ENCODE measurements at regions of chr5 and their contacts with region 1.

Region 1: GRCh38 chr5:10275991-10276390 is 25.9 kb downstream of the CCT5 start:
- DNase-seq: no peak
- H3K4me3 ChIP-seq: no peak overlapping the region
- H3K27ac ChIP-seq: no peak overlapping the region
- H3K4me1 ChIP-seq: no peaks in the 10 kb centered on the region
- H3K27me3 ChIP-seq: no peaks in the 10 kb centered on the region
- CTCF ChIP-seq: no peak

Region 2: DNA sequence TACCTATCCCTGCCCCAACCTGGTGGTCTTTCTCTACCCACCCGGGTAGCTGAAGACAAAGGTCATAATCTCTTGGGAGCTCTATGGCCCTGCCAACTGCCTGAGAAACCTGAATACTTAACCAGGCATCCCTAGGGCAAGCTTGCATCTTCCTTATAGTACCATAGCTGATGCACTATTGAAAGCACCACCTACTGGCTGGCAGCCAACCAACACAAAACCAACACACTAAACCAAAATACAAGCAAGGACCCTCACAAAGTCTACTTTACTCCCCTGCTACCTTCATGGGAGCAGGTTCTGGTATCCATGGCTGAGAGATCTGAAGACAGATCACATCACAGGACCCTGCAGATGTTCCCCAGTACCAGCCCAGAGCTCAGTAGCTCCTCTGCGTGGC is 474.1 kb before region 1 on chr5:
- CTCF ChIA-PET with region 1: no interaction called
- POLR2A ChIA-PET with region 1: no interaction called
- intact Hi-C with region 1: no loop called
- DNase-seq: no peak
- H3K4me3 ChIP-seq: no peak overlapping the region
- H3K27ac ChIP-seq: no peak overlapping the region
- H3K4me1 ChIP-seq: no peaks in the 10 kb centered on the region
- H3K27me3 ChIP-seq: no peaks in the 10 kb centered on the region
- CTCF ChIP-seq: no peak

Region 3: DNA sequence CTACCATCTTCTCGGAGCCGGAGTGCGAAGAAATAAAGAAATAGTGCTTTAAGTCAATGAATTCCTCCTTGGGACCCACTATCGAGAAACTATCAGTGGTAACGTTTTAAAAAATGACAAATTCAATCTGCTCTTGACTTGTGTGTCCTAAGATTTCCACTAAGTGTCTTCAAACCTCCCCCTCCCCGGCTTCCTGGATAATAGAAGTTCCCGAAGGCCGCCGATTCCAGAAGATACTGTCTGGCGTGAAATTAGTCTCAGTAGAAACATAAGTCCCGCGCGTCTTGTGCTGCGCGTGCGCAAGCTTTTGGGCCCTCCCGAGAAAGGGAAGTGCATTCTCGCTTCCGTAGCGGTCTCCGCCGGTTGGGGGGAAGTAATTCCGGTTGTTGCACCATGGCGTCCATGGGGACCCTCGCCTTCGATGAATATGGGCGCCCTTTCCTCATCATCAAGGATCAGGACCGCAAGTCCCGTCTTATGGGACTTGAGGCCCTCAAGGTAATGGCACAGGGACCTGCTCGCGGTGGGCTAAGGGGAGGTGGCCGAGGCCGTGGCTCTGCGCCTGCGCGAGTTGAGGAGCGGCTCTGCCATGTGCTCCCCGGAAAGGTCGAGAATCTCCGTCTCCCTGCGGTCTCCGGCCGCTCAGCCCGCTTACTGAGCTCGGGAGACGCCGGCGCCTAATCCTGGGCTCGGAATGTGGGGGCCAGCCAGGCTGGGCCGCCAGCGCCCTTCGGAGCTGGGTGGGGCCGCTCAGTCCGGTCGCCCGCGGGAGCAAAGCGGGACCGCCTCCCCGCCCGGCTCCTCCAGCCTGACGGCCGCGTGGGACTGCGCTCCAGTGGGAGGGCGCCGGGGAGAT is 25.8 kb before region 1 on chr5 and contains the start of gene CCT5:
- CTCF ChIA-PET with region 1: no interaction called
- POLR2A ChIA-PET with region 1: interaction called, 14 read pairs
- intact Hi-C with region 1: no loop called
- DNase-seq: peak; percentile 97 to 98
- H3K4me3 ChIP-seq: peak within 1 kb of the TSS; percentile 100
- H3K27ac ChIP-seq: peak within 1 kb of the TSS; percentile 91
- H3K4me1 ChIP-seq: peaks cover 17% of the 10 kb centered on the region
- H3K27me3 ChIP-seq: no peaks in the 10 kb centered on the region
- CTCF ChIP-seq: no peak
- total RNA-seq, gene CCT5: 658 and 831 TPM in 2 replicates

Region 4: DNA sequence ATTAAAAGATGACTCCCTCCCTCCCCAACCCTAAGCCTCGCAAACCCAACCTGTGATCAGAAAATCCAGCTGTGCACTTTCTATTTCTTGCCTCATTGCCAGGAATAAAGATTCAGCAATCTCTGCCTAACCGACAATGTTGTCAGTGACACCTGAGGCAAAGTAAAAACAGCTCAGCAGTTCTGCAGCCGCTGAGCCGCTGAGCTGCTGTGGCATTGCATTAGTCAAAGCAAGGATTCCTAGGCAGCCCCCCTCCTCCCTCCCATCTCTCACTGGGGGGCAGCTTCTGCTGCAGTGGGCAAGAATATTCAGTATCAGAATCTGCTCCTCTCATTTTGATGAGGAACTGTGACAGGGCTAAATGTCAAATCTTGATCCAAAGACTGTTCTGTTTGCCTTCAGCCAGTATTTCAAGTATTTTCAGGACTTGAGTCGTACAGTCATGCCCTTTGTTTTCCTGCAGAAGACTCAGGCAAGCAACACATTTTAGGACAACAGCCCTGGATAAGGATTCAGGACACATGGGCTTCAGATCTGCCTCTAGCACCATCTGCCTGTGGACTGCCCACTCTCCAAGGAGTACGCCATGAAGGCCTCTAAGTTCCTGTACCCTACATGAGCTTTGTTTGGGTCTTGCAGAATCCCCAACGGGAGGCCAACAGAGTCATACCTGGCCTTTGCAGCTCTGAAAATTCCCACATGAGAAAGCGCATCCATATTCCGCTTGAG is 526.1 kb after region 1 on chr5:
- CTCF ChIA-PET with region 1: no interaction called
- POLR2A ChIA-PET with region 1: no interaction called
- intact Hi-C with region 1: no loop called
- DNase-seq: peak in 1 of 2 experiments; percentile 32
- H3K4me3 ChIP-seq: no peak overlapping the region
- H3K27ac ChIP-seq: no peak overlapping the region
- H3K4me1 ChIP-seq: no peaks in the 10 kb centered on the region
- H3K27me3 ChIP-seq: no peaks in the 10 kb centered on the region
- CTCF ChIP-seq: no peak

Measured in PC-9 (cell line).